GM10248 (cell line): ENCODE measurements at regions of chr9 and their contacts with region 1.

Region 1: DNA sequence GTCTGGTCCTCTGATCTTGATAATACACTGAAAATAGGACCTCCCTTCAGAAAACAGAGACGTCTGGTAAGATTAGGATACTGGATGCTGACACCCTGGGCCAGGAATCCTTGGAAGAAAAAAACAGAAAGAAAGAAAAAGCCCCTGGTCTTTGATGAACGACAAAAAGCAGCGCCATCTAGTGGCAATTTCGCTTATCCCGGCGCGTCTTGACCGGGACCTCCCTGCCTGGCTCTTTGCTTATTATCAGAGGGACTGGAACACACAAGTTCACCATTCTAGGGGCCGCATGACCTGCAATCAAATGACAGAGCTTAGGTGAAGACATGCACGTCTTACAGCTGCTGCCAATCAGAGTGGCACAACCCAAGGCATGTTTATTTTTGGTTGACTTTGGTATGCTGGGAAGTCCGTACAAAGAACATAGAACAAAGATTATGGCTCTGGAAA is 114.9 kb upstream of the NFIB start:
- DNase-seq: peak; percentile 34
- CTCF ChIP-seq: peak; percentile 69

Region 2: GRCh38 chr9:14415947-14416346 is 12.9 kb before region 1 on chr9:
- CTCF ChIA-PET with region 1: interaction called, 62 read pairs
- POLR2A ChIA-PET with region 1: no interaction called
- DNase-seq: no peak
- CTCF ChIP-seq: no peak

Region 3: GRCh38 chr9:14441976-14442651 is 13.3 kb after region 1 on chr9:
- CTCF ChIA-PET with region 1: interaction called, 31 read pairs
- POLR2A ChIA-PET with region 1: no interaction called
- DNase-seq: no peak
- CTCF ChIP-seq: no peak